Vagina (tissue), 2 donors: ENCODE measurements at regions of chr10 and their contacts with region 1.

Region 1: GRCh38 chr10:35563261-35563891 is 41.8 kb upstream of the GJD4 start:
- DNase-seq: no peak
- H3K4me3 ChIP-seq: no peak overlapping the region
- H3K27ac ChIP-seq: no peak overlapping the region
- H3K4me1 ChIP-seq: no peaks in the 10 kb centered on the region
- H3K27me3 ChIP-seq: no peaks in the 10 kb centered on the region
- CTCF ChIP-seq: peak; percentile 39 to 89 (median 58)
- POLR2A ChIP-seq: no peak

Region 2: GRCh38 chr10:35336084-35336831 is 227.1 kb before region 1 on chr10 and contains the start of gene CCNY:
- intact Hi-C with region 1: loop called (anchors 10 kb)
- DNase-seq: no peak
- H3K4me3 ChIP-seq: peak within 1 kb of the TSS; percentile 85 to 99
- H3K27ac ChIP-seq: peak within 1 kb of the TSS; percentile 93
- H3K4me1 ChIP-seq: peaks cover 75% of the 10 kb centered on the region
- H3K27me3 ChIP-seq: no peaks in the 10 kb centered on the region
- CTCF ChIP-seq: no peak
- POLR2A ChIP-seq: peak in 1 of 2 donors; percentile 60
- total RNA-seq, gene CCNY: 28.5 TPM